ENCODE measurements at regions of chr18 and their contacts with region 1.

Region 1: GRCh38 chr18:54671291-54671881 is 80.3 kb downstream of the DYNAP start:
- DNase-seq: no peak
- H3K4me3 Mint-ChIP-seq: no peak overlapping the region
- H3K27ac Mint-ChIP-seq: no peak overlapping the region
- H3K4me1 Mint-ChIP-seq: no peaks in the 10 kb centered on the region
- H3K27me3 Mint-ChIP-seq: peaks cover 7% of the 10 kb centered on the region

Region 2: DNA sequence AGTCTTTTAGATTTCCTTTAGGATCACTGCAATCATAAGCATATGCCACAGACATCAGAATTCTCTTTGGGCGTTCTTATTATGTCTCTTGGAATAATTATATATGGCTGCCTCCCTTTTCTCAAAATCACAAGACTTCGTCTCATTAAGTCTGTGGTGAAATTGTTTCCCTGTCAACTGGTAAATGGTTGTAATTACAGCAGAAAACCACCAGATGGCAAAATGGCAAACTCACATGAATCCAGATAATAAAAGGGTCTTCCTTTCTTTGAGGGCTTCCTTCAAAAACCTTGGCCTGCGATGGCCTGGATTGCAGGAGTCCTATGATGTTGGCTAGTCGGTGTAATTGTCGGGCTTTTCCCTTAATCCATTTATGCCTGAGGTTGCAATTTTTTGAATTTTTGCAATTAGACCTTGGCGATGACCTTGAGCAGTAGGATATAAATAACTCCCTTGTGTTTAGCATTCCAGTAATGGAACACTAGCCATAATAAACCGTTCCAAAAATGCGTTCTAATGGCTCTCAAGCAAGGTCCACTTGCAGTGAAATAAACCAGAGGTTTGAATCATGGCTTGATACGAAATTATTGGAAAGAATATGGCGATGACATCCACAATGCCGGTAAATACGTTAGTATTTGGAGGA is 1103.3 kb before region 1 on chr18:
- intact Hi-C with region 1: loop called (anchors 1 kb)
- DNase-seq: no peak
- H3K4me3 Mint-ChIP-seq: no peak overlapping the region
- H3K27ac Mint-ChIP-seq: no peak overlapping the region
- H3K4me1 Mint-ChIP-seq: no peaks in the 10 kb centered on the region
- H3K27me3 Mint-ChIP-seq: no peaks in the 10 kb centered on the region

Region 3: DNA sequence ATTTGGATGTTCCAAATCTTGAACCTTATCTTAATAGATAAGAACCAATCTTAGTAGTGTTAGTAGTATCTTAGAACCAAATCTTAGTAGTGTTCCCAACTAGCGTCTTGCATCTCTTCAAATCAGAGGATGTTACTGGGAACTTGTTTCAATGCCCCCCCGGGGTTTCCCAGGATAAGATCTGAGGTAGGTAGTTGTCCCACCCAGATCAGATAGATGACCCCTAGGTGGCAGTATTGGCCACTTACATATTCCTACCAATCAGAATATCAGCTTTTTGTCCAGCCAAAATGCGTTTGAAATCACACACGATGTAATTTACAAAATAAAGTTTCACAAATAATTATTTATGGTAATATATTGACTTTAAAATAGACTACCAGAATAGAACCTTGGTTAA is 761.7 kb before region 1 on chr18:
- intact Hi-C with region 1: loop called (anchors 2 kb)
- DNase-seq: no peak
- H3K4me3 Mint-ChIP-seq: no peak overlapping the region
- H3K27ac Mint-ChIP-seq: no peak overlapping the region
- H3K4me1 Mint-ChIP-seq: no peaks in the 10 kb centered on the region
- H3K27me3 Mint-ChIP-seq: peaks cover 5% of the 10 kb centered on the region

Region 4: DNA sequence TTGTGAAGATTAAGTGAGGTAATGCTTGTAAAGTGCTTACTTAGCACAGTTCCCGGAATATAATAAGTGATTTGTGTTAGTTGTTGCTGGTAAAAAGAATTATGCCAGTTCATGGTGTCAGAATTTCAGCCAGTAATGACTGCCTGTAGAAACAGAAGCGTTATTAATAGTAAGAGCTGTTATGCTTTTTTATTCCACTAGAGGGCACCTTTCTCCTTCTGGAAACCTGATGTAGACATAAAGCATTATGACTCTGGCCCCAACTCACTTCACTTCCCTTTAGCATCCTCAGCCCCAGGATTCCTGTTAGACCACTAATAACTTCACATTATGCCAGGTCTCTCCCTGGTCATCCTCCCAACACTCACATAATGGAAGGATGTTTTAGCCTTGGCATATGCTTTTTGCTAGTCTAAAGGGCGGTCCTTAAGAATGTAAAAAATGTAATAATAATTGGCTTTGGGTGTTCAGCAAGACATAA is 278.8 kb before region 1 on chr18:
- intact Hi-C with region 1: loop called (anchors 1 kb)
- DNase-seq: no peak
- H3K4me3 Mint-ChIP-seq: no peak overlapping the region
- H3K27ac Mint-ChIP-seq: no peak overlapping the region
- H3K4me1 Mint-ChIP-seq: peaks cover 43% of the 10 kb centered on the region
- H3K27me3 Mint-ChIP-seq: peaks cover 3% of the 10 kb centered on the region

Region 5: DNA sequence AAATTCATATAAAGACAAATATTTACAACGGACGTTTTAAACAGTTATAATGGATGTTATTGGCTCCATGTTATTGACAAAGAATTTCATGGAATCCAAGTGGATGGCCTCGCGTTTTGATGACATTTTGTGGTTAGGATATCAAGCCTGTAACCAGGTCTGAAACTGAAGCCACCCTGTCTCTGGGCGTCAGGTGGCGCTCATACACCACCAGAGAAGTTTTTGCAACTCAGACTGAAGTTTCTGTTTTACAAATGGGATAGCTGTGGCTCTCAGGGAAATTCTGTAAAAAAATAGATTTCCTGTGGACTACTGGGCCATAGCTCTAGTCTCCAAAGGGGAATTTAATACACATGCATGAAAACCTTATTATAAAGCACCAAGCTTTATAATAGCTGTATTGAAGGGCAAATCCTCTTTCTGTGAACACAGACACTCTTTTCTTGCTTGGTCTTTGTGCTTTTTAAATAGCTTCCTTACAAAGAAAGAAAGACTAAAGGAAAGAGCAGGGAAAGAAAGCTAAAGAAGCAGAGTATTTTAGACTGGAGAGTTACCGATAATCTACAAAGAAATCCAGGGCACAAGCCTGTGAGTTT is 227.0 kb before region 1 on chr18:
- intact Hi-C with region 1: loop called (anchors 1 kb)
- DNase-seq: no peak
- H3K4me3 Mint-ChIP-seq: no peak overlapping the region
- H3K27ac Mint-ChIP-seq: no peak overlapping the region
- H3K4me1 Mint-ChIP-seq: no peaks in the 10 kb centered on the region
- H3K27me3 Mint-ChIP-seq: peaks cover 9% of the 10 kb centered on the region

Region 6: DNA sequence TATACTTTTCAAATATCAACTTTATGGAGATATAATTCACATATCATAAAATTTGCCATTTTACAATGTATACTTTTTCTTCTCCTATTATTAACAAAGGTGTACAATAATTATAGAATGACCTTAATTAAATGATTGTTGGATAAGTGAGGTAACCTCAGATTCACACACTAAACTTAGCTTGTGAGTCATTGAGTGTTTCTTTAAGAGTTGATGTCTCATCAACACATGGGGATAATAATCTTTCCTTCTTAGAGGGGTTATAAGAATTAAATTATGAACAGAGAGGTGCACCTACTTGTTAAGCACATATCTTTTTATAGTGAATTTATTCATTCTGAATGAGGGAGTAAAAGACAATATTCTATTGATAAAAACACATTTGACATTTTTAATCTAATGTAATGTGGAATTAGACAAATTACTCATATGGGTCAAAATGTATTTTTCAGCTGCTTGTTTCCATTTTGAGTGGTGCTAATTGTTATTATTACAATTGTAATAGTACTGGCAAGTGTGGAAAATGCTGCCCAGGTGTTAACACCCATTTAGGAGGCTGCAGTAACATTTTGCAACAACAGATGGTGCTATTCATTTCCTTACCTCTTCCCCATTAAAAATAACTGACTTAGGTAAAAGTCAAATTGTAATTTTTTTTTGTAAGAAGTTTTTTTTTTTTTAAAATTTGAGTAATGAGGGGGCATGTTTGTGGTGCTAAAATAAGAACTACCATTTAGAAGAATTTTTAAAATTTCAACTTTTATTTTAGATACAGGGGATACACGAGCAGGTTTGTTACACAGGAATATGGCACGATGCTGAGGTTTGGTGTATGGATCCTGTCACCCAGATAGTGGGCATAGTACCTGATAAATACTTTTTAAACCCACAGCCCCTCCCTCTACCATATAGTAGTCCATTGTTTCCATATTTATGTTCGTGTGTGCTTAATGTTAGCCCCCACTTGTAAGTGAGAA is 112.5 kb before region 1 on chr18:
- intact Hi-C with region 1: loop called (anchors 1 kb)
- DNase-seq: no peak
- H3K4me3 Mint-ChIP-seq: no peak overlapping the region
- H3K27ac Mint-ChIP-seq: no peak overlapping the region
- H3K4me1 Mint-ChIP-seq: no peaks in the 10 kb centered on the region
- H3K27me3 Mint-ChIP-seq: no peaks in the 10 kb centered on the region

Region 7: DNA sequence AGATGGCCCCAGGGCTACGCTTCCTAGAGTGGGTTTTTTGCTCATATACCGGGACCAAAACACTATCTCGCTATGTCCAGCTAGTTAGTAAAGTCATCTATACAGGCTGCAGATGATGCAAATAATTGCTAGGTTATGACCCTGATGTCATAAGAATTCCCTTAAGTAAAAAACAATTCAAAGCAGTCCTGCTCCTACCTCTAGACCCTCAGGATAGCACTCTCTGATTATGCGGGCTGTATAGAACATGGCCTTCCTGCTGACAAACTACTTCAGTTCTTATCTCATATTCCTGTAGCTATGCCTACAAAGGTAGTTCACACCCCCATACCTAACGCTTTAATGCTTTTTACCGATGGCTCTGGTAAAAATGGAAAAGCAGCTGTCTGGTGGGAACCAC is 67.2 kb before region 1 on chr18:
- intact Hi-C with region 1: no loop called
- DNase-seq: no peak
- H3K4me3 Mint-ChIP-seq: no peak overlapping the region
- H3K27ac Mint-ChIP-seq: no peak overlapping the region
- H3K4me1 Mint-ChIP-seq: peaks cover 10% of the 10 kb centered on the region
- H3K27me3 Mint-ChIP-seq: no peaks in the 10 kb centered on the region